Caco-2 (cell line): ENCODE measurements at regions of chr6 and their contacts with region 1.

Region 1: DNA sequence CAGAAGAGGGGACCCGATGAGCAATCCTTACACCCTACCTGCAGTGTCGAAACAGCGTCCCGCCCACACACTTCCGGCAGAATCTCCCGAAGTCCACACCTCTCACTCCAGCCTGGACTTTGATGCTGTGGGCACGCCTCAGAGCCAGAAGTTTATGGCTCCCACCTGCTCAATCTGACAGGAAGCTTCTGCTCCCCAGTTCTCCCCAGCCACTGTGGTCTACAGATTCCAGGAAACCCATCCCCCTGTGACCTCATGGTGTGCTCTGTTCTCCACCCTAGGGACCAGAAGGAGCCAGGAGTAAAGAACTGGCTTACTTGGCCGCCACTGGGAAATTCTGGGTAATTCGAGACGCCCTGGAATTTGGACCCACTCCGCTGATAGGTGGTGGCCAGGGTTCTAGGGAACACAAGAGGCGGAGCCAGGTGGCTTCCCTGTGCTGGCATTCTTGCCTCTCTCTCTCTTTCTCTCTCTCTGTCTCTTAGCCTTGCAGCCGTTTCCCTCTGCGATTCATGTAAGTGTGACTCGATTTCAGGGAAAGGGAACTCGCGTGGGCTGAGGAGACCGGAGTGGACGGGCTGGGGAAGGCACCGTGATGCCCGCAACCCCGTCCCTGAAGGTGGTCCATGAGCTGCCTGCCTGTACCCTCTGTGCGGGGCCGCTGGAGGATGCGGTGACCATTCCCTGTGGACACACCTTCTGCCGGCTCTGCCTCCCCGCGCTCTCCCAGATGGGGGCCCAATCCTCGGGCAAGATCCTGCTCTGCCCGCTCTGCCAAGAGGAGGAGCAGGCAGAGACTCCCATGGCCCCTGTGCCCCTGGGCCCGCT is at the start of gene TRIM15:
- DNase-seq: peak; percentile 85 to 91
- H3K4me3 ChIP-seq: peak within 1 kb of the TSS; percentile 89
- H3K4me3 Mint-ChIP-seq: peak within 1 kb of the TSS; percentile 92
- H3K27ac Mint-ChIP-seq: peak within 1 kb of the TSS; percentile 92
- H3K4me1 ChIP-seq: no peaks in the 10 kb centered on the region
- H3K4me1 Mint-ChIP-seq: peaks cover 14% of the 10 kb centered on the region
- H3K27me3 ChIP-seq: no peaks in the 10 kb centered on the region
- H3K27me3 Mint-ChIP-seq: no peaks in the 10 kb centered on the region
- CTCF ChIP-seq: no peak
- total RNA-seq, gene TRIM15: 5.2 and 6.9 TPM in 2 replicates

Region 2: GRCh38 chr6:30061092-30061857 is 102.0 kb before region 1 on chr6 and contains the start of gene POLR1H:
- CTCF ChIA-PET with region 1: no interaction called
- POLR2A ChIA-PET with region 1: no interaction called
- intact Hi-C with region 1: loop called (anchors 5 kb)
- DNase-seq: peak; percentile 93 to 94
- H3K4me3 ChIP-seq: peak within 1 kb of the TSS; percentile 77
- H3K4me3 Mint-ChIP-seq: peak within 1 kb of the TSS; percentile 88
- H3K27ac Mint-ChIP-seq: peak within 1 kb of the TSS; percentile 90
- H3K4me1 ChIP-seq: peaks cover 15% of the 10 kb centered on the region; the same call in 1 of the 2 replicates
- H3K4me1 Mint-ChIP-seq: peaks cover 15% of the 10 kb centered on the region
- H3K27me3 ChIP-seq: no peaks in the 10 kb centered on the region
- H3K27me3 Mint-ChIP-seq: no peaks in the 10 kb centered on the region
- CTCF ChIP-seq: no peak
- total RNA-seq, gene POLR1H: 26.1 and 27.6 TPM in 2 replicates

Region 3: GRCh38 chr6:30206799-30207618 is 43.7 kb after region 1 on chr6:
- CTCF ChIA-PET with region 1: no interaction called
- POLR2A ChIA-PET with region 1: no interaction called
- intact Hi-C with region 1: loop called (anchors 2 kb)
- DNase-seq: peak; percentile 75 to 79
- H3K4me3 ChIP-seq: peak overlapping the region; percentile 22
- H3K4me3 Mint-ChIP-seq: peak overlapping the region; percentile 68
- H3K27ac Mint-ChIP-seq: peak overlapping the region; percentile 82
- H3K4me1 ChIP-seq: peaks cover 50% of the 10 kb centered on the region
- H3K4me1 Mint-ChIP-seq: peaks cover 43% of the 10 kb centered on the region
- H3K27me3 ChIP-seq: no peaks in the 10 kb centered on the region
- H3K27me3 Mint-ChIP-seq: no peaks in the 10 kb centered on the region
- CTCF ChIP-seq: no peak